ENCODE measurements at regions of chr1 and their contacts with region 1.

Region 1: DNA sequence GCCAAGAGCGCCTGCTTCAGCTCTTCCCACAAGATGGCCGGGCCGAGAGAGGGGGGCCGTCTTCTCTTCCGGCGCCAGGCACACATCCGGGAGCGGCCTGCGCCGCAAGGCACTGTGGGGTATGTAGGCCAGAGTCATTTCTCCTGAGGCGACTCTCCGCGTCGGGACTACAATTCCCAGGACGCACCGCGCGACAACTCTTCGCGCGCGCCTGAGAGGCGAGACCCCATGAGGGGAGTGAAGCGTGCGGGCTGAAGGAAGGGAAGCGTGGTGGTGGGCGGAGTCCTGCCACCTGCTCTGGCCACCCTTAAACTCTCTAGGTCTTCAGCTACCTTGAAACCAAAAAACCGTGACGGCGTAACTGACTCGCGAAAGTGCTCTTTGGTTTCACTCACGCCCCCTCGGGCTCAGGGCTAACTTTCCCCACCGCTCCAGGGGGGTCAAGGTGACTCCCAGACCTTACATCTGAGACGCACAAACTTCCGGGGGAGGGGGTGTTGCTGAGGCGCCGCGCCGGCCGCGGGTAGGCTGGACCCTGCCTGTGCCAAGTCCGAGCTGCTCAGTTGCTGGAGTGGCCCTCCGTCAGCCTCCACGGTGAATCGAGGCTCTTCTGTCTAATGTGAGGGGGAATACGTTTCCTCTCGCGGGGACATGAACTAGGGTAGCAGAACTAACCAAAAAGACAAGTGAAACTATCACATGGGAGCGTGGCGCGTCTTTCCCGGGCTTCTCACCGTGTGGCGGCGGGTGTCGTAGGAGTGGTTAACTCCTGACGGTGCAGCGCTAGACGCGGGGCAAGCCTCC is at the start of gene SERBP1:
- DNase-seq: peak; percentile 92 to 95
- H3K4me3 ChIP-seq: peak within 1 kb of the TSS; percentile 95 to 100 (median 98)
- H3K27ac ChIP-seq: peak within 1 kb of the TSS; percentile 94
- H3K4me1 ChIP-seq: peaks cover 0 to 12% (median 2%) of the 10 kb centered on the region in 4 experiments; a peak in 3 of 7 replicates
- H3K27me3 ChIP-seq: no peaks in the 10 kb centered on the region
- CTCF ChIP-seq: no peak
- EP300 ChIP-seq: no peak
- POLR2A ChIP-seq: peak; percentile 58 to 74
- RAD21 ChIP-seq: no peak; a peak in 1 of 4 replicates
- total RNA-seq, gene SERBP1: 536 and 539 TPM in 2 replicates

Region 2: GRCh38 chr1:67418839-67419586 is 11.5 kb before region 1 on chr1:
- CTCF ChIA-PET with region 1: interaction called, 9 read pairs
- POLR2A ChIA-PET with region 1: interaction called, 153 read pairs
- DNase-seq: no peak
- H3K4me3 ChIP-seq: no peak overlapping the region
- H3K27ac ChIP-seq: no peak overlapping the region
- H3K4me1 ChIP-seq: no peaks in the 10 kb centered on the region
- H3K27me3 ChIP-seq: no peaks in the 10 kb centered on the region
- CTCF ChIP-seq: no peak
- EP300 ChIP-seq: no peak
- POLR2A ChIP-seq: no peak
- RAD21 ChIP-seq: no peak

Region 3: DNA sequence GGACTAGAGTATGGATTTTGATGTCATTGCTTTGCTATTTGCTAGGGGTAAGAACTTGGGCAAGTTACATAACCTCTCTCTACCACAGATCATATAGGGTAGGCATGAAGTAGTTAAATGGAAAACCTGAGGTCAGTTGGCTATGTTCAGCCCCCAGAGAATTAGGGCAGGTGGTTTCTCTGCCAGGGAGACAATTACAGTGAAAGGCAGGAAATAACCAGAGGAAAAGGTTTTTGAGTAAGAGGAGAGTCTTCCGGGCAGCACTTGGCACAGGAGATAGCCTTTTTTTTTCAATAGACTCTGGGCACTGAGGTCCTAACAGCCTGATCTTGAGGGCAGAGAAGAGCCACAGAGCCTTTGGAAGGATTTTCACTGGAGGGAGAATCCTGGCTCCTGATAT is 16.3 kb after region 1 on chr1:
- CTCF ChIA-PET with region 1: interaction called, 9 read pairs
- POLR2A ChIA-PET with region 1: interaction called, 37 read pairs
- DNase-seq: no peak
- H3K4me3 ChIP-seq: no peak overlapping the region
- H3K27ac ChIP-seq: no peak overlapping the region
- H3K4me1 ChIP-seq: peaks cover 0 to 2% (median under 1%) of the 10 kb centered on the region in 4 experiments; a peak in 2 of 7 replicates
- H3K27me3 ChIP-seq: no peaks in the 10 kb centered on the region
- CTCF ChIP-seq: no peak
- EP300 ChIP-seq: no peak
- POLR2A ChIP-seq: no peak
- RAD21 ChIP-seq: no peak

Region 4: DNA sequence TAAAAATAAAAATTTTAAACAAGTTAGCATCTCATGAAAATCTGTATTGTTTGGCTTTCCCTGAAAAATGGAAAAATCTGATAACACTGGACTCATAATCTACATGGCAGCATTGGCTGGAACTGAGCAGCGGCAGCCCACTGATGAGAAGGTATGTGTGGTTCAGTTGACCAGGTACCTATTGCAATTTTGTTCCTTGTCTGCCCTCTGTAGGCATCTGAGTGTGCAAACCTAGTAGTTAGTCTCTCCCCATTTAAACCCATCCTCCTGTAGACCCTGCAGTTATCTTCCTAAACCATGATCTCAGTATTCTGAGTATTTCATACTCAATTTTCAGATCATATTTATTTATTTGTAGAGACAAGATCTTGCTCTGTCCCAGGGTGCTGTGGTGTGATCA is 59.1 kb after region 1 on chr1:
- CTCF ChIA-PET with region 1: interaction called, 21 read pairs
- POLR2A ChIA-PET with region 1: interaction called, 45 read pairs
- DNase-seq: no peak
- H3K4me3 ChIP-seq: no peak overlapping the region
- H3K27ac ChIP-seq: no peak overlapping the region
- H3K4me1 ChIP-seq: peaks cover 0 to under 1% (median 0%) of the 10 kb centered on the region in 4 experiments; a peak in 2 of 7 replicates
- H3K27me3 ChIP-seq: no peaks in the 10 kb centered on the region
- CTCF ChIP-seq: peak in 2 of 3 experiments; percentile 60 to 64; a peak in 2 of 4 replicates
- EP300 ChIP-seq: no peak
- POLR2A ChIP-seq: no peak
- RAD21 ChIP-seq: peak; percentile 85 to 88

Region 5: GRCh38 chr1:67575861-67576260 is 145.3 kb after region 1 on chr1:
- CTCF ChIA-PET with region 1: no interaction called
- POLR2A ChIA-PET with region 1: no interaction called
- DNase-seq: no peak
- H3K4me3 ChIP-seq: no peak overlapping the region
- H3K27ac ChIP-seq: no peak overlapping the region
- H3K4me1 ChIP-seq: 0 out of 7 replicates have a peak, but pooled peaks cover 0 to 2% (median 0%) of the 10 kb centered on the region in 4 experiments
- H3K27me3 ChIP-seq: no peaks in the 10 kb centered on the region
- CTCF ChIP-seq: no peak
- EP300 ChIP-seq: no peak
- POLR2A ChIP-seq: no peak
- RAD21 ChIP-seq: no peak